ENCODE measurements at regions of chr1 and their contacts with region 1.

Region 1: DNA sequence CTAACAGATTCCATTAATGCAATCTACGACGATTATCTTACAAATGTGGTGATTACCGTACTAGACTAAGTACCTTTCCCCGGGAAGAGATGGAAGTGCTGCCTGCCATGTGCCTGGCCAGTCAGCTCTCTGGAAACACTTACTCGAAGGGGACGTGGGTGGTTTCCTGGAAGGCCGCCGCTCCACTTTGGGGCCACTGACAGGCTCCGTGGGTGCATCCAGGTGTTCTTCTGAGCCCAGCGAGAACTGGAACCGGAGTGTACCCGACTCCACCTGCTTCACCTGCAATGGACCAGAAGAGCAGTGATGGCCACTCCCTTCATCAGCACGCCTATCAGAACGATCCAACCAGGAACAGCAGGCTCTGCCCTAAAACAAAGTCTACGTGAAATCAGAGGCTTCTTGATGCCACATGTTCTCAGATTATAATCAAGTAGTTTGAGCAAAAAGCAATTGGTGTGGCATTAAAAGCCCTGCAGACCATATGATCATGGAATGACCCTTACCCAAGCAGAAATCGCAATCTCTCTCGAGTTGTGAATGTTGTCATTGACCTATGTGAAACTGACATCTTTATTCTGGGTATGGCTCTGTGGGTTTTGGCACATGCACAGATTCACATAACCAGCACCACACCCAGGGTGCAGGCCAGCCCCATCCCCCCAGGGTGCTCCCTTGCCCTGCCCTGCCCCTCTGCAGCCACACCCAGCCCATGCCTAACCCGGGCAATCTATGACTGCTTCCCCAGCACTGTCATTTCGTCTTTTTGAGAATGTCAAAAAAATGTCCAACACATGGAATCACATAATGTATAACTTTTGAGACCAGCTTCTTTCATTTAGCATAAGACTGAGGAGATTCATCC is 64.5 kb downstream of the NPHP4 start:
- DNase-seq: no peak
- ATAC-seq: no peak
- H3K4me3 ChIP-seq: no peak overlapping the region
- H3K4me3 Mint-ChIP-seq: no peak overlapping the region
- H3K27ac ChIP-seq: no peak overlapping the region
- H3K27ac Mint-ChIP-seq: no peak overlapping the region
- H3K4me1 ChIP-seq: no peaks in the 10 kb centered on the region
- H3K4me1 Mint-ChIP-seq: peaks cover 0 to 11% of the 10 kb centered on the region in 2 donors
- H3K27me3 ChIP-seq: no peaks in the 10 kb centered on the region
- H3K27me3 Mint-ChIP-seq: no peaks in the 10 kb centered on the region
- CTCF ChIP-seq: no peak

Region 2: DNA sequence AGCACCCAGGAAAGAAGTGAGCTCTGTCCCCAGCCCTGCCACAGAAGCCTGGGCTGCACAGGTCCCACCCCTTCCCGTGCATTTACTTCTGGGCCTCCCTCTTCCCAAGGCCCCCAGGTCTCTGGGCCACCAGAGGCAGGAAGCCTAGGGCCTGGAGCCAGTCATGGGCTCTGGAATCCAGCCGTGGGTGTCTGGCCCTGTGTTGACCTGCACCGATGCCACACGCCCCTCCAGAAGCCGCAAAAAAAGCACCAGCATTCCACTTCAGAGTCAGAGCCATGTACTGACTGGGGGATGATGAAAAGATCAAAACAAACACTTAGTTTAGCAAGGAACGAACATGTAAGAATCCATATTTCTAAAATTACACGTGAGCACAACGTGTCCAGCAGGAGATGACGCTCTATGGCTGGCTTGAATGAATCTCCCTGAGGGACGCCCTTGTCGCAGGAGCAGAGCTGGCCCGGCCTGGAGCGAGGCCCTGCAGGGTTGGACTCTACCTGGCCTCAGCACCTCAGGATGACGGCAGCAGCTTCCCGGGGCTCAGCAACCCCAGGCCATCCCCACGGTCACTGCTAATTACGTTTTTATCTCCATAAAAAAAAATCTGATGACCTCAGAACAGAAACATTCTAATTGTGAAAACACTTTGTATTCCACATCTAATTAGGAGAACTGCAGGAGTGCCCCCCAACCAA is 77.1 kb before region 1 on chr1:
- intact Hi-C with region 1: no loop called
- DNase-seq: no peak
- ATAC-seq: no peak
- H3K4me3 ChIP-seq: no peak overlapping the region
- H3K4me3 Mint-ChIP-seq: no peak overlapping the region
- H3K27ac ChIP-seq: no peak overlapping the region
- H3K27ac Mint-ChIP-seq: no peak overlapping the region
- H3K4me1 ChIP-seq: no peaks in the 10 kb centered on the region
- H3K4me1 Mint-ChIP-seq: no peaks in the 10 kb centered on the region
- H3K27me3 ChIP-seq: no peaks in the 10 kb centered on the region
- H3K27me3 Mint-ChIP-seq: peaks cover 0 to 6% of the 10 kb centered on the region in 2 donors
- CTCF ChIP-seq: no peak

Region 3: DNA sequence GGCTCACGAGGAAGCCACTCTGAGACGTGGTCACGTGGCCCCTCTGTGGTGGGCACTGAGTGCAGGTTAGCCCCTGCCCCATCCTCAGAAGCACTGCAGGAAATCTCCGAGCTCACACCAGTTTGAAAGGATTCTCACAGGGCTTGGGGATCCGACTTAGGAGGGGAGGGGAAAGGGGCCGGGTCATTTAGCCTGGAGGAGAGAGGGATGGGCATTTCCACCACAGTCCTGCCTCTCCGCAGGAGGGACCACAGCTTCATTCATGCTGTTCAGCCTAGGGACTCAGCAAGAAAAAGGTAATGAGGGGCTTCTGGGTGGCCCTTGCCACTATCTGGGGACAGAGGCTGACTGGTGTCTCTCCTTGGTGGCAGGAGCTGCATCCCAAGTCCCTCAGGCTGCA is 62.0 kb before region 1 on chr1:
- intact Hi-C with region 1: no loop called
- DNase-seq: no peak
- ATAC-seq: no peak
- H3K4me3 ChIP-seq: no peak overlapping the region
- H3K4me3 Mint-ChIP-seq: no peak overlapping the region
- H3K27ac ChIP-seq: no peak overlapping the region
- H3K27ac Mint-ChIP-seq: no peak overlapping the region
- H3K4me1 ChIP-seq: no peaks in the 10 kb centered on the region
- H3K4me1 Mint-ChIP-seq: peaks cover 0 to 5% of the 10 kb centered on the region in 2 donors
- H3K27me3 ChIP-seq: no peaks in the 10 kb centered on the region
- H3K27me3 Mint-ChIP-seq: no peaks in the 10 kb centered on the region
- CTCF ChIP-seq: no peak

Region 4: DNA sequence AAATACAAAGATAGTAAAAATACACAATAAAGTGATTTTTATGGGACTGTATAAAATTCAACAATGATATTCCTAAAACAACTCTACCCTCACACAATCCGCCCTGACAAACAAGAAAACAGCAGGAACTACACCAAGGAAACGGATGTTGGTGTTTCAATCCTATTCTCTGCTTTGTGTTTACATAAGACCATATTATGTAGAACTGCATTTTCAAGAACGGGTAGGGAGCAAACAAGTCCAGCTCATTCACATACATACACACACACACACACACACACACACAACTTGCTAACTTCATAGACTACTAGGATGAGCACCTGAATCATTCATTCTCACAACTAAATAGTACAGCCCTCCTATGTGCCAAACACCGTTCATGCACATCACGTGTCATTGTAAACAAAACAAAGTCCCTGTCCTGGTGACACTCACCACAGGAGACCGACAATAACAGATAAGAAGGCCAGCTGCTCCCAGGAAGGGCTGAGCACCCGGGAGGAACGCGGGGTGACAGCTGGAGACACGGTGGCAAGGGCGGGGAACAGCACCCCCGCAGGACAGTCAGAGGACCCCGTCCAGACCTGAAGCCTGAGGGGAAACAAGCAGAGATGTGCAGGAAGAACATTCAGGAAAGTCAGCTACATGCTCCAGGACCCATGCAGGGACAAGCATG is 21.5 kb after region 1 on chr1:
- intact Hi-C with region 1: no loop called
- DNase-seq: no peak
- ATAC-seq: no peak
- H3K4me3 ChIP-seq: no peak overlapping the region
- H3K4me3 Mint-ChIP-seq: no peak overlapping the region
- H3K27ac ChIP-seq: no peak overlapping the region
- H3K27ac Mint-ChIP-seq: no peak overlapping the region
- H3K4me1 ChIP-seq: no peaks in the 10 kb centered on the region
- H3K4me1 Mint-ChIP-seq: peaks cover 0 to under 1% of the 10 kb centered on the region in 2 donors
- H3K27me3 ChIP-seq: no peaks in the 10 kb centered on the region
- H3K27me3 Mint-ChIP-seq: no peaks in the 10 kb centered on the region
- CTCF ChIP-seq: no peak

Region 5: DNA sequence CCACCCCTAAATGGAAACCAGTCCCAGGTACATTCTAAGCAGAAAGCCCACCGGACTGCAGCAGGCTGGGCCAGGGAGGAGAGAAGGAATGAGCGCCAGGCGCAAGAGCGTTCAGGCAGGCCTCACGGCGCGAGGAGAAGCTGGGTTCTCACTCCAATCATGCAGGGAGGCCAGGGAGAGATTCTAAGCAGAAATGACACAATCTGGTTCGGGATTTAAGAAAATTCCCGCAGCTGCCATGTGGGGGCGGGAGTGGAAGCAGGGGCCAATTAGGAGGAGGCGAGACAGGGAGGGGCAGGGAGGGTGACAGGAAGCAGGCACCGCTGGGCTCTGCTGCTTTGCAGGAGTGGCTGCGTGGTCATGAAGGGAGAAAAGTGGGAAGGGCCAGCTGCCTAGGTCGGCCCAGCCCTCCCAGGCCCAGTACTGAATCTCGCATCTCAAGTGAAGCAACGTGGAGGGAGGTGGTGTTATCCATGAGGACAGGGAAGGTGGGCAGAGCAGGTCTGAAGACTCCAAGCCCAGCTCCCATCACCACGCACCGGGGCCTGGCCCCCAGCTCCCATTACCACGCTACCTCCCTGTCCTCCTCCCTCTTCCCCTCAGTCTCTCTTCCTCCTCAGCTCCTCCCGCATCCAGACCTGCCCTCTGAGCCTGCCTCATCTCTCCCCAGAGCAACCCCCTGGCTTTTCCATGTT is 52.7 kb after region 1 on chr1:
- intact Hi-C with region 1: loop called (anchors 10 kb)
- DNase-seq: no peak
- ATAC-seq: no peak
- H3K4me3 ChIP-seq: no peak overlapping the region
- H3K4me3 Mint-ChIP-seq: no peak overlapping the region
- H3K27ac ChIP-seq: no peak overlapping the region
- H3K27ac Mint-ChIP-seq: no peak overlapping the region
- H3K4me1 ChIP-seq: peaks cover 1% of the 10 kb centered on the region
- H3K4me1 Mint-ChIP-seq: peaks cover 0 to 24% of the 10 kb centered on the region in 2 donors
- H3K27me3 ChIP-seq: no peaks in the 10 kb centered on the region
- H3K27me3 Mint-ChIP-seq: no peaks in the 10 kb centered on the region
- CTCF ChIP-seq: no peak

Measured in natural killer cell (primary cell).